ENCODE measurements at regions of chr1 and their contacts with region 1.

Region 1: DNA sequence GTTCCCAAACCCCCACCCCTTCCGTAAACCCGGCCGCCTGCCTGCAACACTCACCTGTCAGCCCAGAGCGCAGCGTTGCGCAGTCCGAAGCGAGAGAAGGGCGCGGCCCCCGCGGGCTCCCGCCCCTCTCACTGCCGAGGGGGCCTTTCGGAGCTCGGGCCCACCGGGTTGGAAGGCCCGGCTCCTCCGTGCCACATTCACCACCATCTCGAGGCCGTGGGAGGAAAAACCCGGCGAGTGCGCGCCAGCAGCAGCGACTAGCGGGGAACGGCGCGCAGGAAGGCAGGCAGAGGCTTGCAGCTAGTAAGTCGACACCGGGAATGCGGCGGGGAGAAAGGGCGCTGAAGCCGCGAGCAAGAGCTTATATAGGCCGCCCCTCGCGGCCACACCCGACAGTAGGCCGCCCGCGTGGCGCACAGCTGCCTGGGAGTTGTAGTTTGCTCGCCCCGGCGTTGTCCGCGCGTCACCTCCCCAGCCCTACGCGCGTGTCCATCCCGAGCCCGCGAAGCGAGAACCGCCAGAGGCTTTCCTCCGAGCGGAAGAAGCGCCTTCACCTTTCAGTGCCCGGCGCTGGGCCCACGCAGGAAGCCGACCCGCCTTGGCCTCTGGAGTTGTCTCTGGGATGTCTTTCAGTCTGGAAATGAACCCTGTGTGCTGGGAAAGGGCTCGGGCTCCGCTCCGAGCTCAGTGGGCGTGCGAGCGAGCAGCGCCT is 10.4 kb upstream of the RAB42 start:
- DNase-seq: peak; percentile 97
- H3K4me3 ChIP-seq: peak overlapping the region; percentile 75
- H3K27ac ChIP-seq: peak overlapping the region; percentile 81
- H3K4me1 ChIP-seq: peaks cover 13% of the 10 kb centered on the region
- H3K27me3 ChIP-seq: no peaks in the 10 kb centered on the region
- CTCF ChIP-seq: 0 out of 2 replicates have a peak, but pooled peaks have one; percentile 0

Region 2: DNA sequence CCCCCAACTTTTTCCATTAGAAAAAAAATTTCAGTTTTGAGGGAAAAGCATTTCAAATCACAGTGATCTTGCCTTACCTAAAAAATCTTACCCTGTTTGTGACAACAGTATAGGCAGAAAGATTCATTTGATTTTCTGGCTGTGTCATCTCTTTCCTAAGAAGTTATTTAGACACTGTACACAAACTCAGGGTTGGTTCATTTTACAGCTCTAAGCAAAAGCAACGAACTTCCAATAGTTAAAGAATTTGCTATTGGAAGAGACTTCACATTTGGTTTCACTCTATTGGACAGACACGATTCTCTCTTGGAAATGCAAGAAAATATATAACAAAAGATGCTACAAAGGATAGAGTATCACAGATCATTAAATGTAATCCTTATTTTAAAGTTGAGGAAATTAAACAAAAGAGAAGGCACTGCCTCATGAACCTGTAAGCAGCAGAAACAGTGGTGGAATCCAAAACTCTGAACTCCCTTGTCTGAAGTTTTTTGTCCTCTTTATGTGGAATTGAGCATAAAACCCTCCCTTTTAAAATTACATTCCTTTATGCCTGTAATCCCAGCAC is 514.1 kb before region 1 on chr1:
- CTCF ChIA-PET with region 1: no interaction called
- POLR2A ChIA-PET with region 1: no interaction called
- intact Hi-C with region 1: no loop called
- DNase-seq: no peak
- H3K4me3 ChIP-seq: no peak overlapping the region
- H3K27ac ChIP-seq: no peak overlapping the region
- H3K4me1 ChIP-seq: peaks cover 21% of the 10 kb centered on the region
- H3K27me3 ChIP-seq: no peaks in the 10 kb centered on the region
- CTCF ChIP-seq: no peak

Region 3: GRCh38 chr1:28505406-28506187 is 76.1 kb before region 1 on chr1 and contains the start of gene RCC1:
- CTCF ChIA-PET with region 1: no interaction called
- POLR2A ChIA-PET with region 1: interaction called, 12 read pairs
- intact Hi-C with region 1: no loop called
- DNase-seq: peak; percentile 99
- H3K4me3 ChIP-seq: peak within 1 kb of the TSS; percentile 85
- H3K27ac ChIP-seq: peak within 1 kb of the TSS; percentile 94
- H3K4me1 ChIP-seq: peaks cover 5% of the 10 kb centered on the region
- H3K27me3 ChIP-seq: no peaks in the 10 kb centered on the region
- CTCF ChIP-seq: no peak
- total RNA-seq, gene RCC1: 111 and 125 TPM in 2 replicates

Region 4: DNA sequence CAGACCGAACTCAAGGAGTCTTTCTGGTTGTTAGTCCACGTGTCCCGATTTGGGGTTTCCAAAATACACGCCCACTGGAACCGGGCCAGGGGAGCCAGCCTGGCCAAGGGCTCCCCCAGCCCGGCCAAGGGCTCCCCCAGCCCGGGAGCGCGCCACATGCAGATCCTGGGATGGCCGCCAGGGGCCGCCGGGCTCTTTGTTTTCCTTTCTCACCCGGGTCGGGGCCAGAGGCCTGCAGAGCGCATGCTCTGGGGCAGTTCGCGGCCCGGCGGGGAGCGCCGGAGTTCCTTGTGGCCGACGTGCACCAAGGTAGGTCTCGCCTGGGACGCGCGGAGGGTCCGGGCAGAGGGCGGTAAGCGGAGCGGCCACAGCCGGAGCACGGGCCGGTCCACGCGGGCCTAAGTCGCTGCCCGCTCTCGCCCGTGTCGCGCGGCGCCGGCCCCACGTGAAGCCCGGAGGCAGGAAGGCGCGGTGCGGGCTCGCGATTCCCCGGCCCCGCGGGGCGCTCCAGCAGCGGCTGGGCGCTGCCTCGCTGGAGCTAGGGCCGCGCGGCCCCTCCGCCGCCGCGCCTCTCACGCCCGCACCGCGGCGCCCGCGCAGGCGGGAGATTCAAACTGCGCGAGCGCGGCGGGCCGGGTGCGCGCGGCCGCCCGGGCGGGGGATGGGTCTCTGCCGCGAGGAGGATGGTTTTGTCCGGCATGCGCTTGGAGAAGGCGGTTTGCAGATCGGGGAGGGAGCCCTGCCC is 63.5 kb before region 1 on chr1:
- CTCF ChIA-PET with region 1: interaction called, 8 read pairs
- POLR2A ChIA-PET with region 1: interaction called, 6 read pairs
- intact Hi-C with region 1: loop called (anchors 5 kb)
- DNase-seq: peak; percentile 95
- H3K4me3 ChIP-seq: peak overlapping the region; percentile 66
- H3K27ac ChIP-seq: peak overlapping the region; percentile 96
- H3K4me1 ChIP-seq: peaks cover 14% of the 10 kb centered on the region
- H3K27me3 ChIP-seq: no peaks in the 10 kb centered on the region
- CTCF ChIP-seq: peak; percentile 95

Region 5: DNA sequence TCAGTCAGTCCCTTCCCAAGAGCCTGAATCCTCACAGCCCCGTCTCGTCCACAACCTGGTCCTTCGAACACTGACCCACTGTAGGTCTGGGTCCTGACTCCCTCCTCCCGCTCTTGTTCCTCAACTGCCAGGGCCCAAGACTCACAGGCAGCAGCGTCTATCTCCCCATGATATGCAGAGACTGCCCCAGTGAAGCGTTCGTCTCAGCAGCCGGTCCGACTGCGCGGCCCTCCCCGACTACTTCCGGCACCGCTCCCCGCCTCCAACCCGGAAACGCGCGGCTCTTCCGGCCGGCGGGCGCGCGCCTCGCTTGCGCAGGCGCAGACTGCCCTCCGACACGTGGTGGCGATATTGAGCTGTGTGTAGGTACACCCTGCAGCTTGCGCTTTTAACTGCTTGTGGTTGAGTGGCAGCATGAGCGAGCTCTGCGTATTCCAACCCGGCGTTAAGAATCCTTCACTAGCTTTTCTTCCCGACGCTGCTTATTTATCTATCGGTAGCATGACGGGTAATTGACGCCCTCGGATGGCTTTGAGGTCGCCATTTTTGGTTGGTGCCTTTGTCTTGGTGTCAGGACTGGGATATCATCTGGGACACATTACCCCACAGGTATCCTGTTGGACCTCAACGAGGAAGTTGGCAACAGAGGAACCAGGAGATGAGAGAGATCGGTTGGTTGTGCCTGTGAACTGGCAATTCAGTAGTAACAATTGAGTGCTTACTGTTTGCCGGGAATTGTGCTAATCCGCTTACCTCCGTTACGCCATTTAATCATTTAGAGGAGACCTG is 61.3 kb after region 1 on chr1 and contains the start of gene TAF12:
- CTCF ChIA-PET with region 1: no interaction called
- POLR2A ChIA-PET with region 1: interaction called, 19 read pairs
- intact Hi-C with region 1: no loop called
- DNase-seq: peak; percentile 98
- H3K4me3 ChIP-seq: peak within 1 kb of the TSS; percentile 81
- H3K27ac ChIP-seq: peak within 1 kb of the TSS; percentile 82
- H3K4me1 ChIP-seq: peaks cover 16% of the 10 kb centered on the region
- H3K27me3 ChIP-seq: no peaks in the 10 kb centered on the region
- CTCF ChIP-seq: peak; percentile 54
- total RNA-seq, gene TAF12: 17.9 and 22.6 TPM in 2 replicates

Region 6: GRCh38 chr1:28668191-28668955 is 86.7 kb after region 1 on chr1 and contains the start of gene GMEB1:
- CTCF ChIA-PET with region 1: no interaction called
- POLR2A ChIA-PET with region 1: interaction called, 15 read pairs
- intact Hi-C with region 1: no loop called
- DNase-seq: peak; percentile 93
- H3K4me3 ChIP-seq: peak within 1 kb of the TSS; percentile 87
- H3K27ac ChIP-seq: peak within 1 kb of the TSS; percentile 96
- H3K4me1 ChIP-seq: peaks cover 9% of the 10 kb centered on the region
- H3K27me3 ChIP-seq: no peaks in the 10 kb centered on the region
- CTCF ChIP-seq: no peak
- total RNA-seq, gene GMEB1: 20.9 and 23.0 TPM in 2 replicates

Region 7: GRCh38 chr1:29033829-29034466 is 452.3 kb after region 1 on chr1:
- CTCF ChIA-PET with region 1: no interaction called
- POLR2A ChIA-PET with region 1: interaction called, 13 read pairs
- intact Hi-C with region 1: no loop called
- DNase-seq: peak; percentile 70
- H3K4me3 ChIP-seq: no peak overlapping the region
- H3K27ac ChIP-seq: no peak overlapping the region
- H3K4me1 ChIP-seq: peaks cover 50% of the 10 kb centered on the region
- H3K27me3 ChIP-seq: no peaks in the 10 kb centered on the region
- CTCF ChIP-seq: peak; percentile 69

Measured in A673 (cell line).